ENCODE measurements at regions of chr12 and their contacts with region 1.

Region 1: DNA sequence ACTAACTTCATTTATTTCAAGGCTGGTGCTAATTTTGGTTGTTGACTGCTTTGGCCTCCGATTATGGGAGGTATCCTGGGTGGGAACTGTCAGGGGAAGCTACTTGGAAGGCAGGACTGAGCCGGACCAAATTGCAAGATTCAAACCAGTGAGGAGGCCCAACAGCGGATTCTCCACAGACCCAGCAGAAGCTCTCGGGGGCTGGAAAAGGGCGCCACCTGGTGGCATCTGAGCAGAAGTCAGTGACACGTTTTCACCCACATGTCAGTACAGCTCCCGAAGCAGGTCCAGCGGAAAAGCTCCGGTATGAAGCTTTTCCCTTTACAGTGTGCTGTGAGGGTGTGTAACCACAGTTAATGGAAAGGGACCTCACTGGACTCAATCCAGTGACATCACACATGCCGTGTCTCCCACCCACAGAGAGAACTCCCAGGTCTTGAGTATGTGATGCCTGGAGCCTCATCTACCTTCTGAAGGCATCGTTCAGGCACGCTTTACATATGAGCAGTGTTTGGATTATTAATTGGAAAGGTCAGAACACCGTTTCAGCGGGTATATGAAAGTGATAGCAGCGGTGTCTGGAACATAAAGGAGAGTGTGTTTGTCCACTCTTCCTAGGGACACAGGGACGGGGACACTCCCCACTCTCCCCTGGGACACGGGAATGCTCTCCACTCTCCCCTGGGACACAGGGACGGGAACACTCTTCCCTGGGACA is 3.6 kb upstream of the P2RX2 start:
- DNase-seq: peak; percentile 80 to 89
- ATAC-seq: peak; percentile 78 to 89
- H3K4me3 ChIP-seq: no peak overlapping the region
- H3K27ac ChIP-seq: no peak overlapping the region
- H3K4me1 ChIP-seq: peaks cover 10% of the 10 kb centered on the region
- CTCF ChIP-seq: peak; percentile 94
- EP300 ChIP-seq: no peak
- POLR2A ChIP-seq: no peak
- RAD21 ChIP-seq: peak; percentile 85 to 92

Region 2: DNA sequence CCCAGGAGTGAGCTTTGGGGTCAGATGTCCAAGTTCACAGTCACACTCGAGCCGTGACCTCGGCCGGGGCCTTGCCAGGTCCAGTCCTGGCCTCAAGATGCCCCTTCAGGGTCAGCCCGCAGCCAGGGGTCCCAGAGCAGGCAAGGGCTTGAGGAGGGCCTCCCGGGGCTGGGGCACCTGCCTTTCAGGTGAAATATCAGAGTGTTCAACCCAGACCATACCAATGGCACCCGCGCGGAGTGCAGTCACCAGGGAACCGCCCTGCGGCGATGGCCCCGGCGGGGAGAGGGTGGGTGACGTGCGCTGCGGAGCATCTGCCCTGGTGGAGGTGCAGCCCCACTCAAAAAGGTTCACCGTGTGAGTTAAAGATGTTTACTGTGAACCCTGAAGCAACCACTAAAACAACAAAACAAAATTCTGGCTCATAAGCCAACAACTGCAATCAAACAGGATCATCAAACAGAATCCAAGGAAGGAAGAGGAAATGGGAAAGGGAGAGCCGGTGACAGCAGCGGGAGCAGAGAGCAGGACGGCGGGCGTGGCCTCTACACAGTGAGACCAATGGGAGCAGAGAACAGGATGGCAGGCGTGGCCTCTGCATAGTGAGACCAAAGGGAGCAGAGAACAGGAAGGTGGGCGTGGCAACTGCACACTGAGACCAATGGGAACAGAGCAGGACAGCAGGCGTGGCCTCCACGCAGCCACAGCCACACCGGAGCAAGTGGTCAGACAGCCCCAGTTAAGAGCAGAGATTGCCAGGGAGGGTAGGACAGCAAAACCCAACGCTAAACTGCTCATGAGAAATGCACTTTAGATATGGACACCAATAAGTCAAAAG is 21.3 kb before region 1 on chr12:
- CTCF ChIA-PET with region 1: interaction called, 36 read pairs
- POLR2A ChIA-PET with region 1: no interaction called
- DNase-seq: peak; percentile 92 to 98
- ATAC-seq: peak; percentile 95 to 99
- H3K4me3 ChIP-seq: no peak overlapping the region
- H3K27ac ChIP-seq: 0 out of 6 replicates have a peak overlapping the region, but pooled peaks of 1 of the 2 experiments have one; percentile 7
- H3K4me1 ChIP-seq: 0 out of 3 replicates have a peak, but pooled peaks cover 3% of the 10 kb centered on the region
- CTCF ChIP-seq: no peak
- EP300 ChIP-seq: no peak
- POLR2A ChIP-seq: no peak
- RAD21 ChIP-seq: no peak

Region 3: GRCh38 chr12:132600048-132601032 is 14.7 kb before region 1 on chr12:
- CTCF ChIA-PET with region 1: interaction called, 36 read pairs
- POLR2A ChIA-PET with region 1: no interaction called
- DNase-seq: peak; percentile 76 to 78
- ATAC-seq: peak; percentile 84 to 91
- H3K4me3 ChIP-seq: peak overlapping the region; percentile 36
- H3K27ac ChIP-seq: peak overlapping the region; percentile 38 to 78; a peak in 5 of 6 replicates
- H3K4me1 ChIP-seq: peaks cover 11% of the 10 kb centered on the region; the same call in 1 of the 3 replicates
- CTCF ChIP-seq: peak; percentile 74
- EP300 ChIP-seq: no peak
- POLR2A ChIP-seq: no peak
- RAD21 ChIP-seq: peak; percentile 72 to 75

Region 4: DNA sequence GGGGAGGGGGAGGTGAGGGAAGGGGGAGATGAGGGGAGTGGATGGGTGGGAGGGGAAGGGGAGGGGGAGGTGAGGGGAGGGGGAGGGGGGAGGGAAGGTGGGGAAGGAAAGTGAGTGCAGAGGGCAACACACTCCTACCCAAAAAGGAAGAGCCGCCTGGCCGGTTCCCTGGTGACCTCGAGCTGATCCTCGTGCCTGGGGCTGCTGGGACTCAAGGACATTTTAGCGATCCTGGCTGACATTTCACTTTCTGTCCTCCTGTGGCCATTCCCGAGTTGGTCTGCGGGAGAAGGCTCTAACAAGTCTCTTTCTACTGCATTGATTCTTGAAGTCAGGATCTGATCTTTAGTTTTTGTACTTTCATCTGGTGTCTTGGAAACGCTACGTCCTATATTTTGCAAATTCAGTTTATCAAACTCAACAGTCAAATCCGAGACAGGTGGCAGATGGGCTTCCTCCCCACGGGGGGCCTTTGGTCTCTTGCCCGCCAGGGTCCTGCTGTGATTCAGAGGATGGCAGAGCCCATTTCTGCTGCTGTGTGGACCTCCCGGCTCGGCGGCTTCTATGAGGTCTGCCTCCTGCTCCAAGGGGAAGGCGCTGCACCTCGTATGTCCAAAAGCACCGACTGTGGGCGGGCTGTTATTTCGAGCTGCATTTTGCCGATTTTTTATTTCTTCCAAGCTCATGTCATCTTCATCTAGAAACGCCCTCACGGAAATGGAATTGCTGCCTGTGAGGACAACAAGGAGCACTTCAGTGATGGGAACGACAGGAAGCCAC is 114.7 kb after region 1 on chr12:
- CTCF ChIA-PET with region 1: no interaction called
- POLR2A ChIA-PET with region 1: no interaction called
- DNase-seq: peak in 1 of 2 experiments; percentile 56
- ATAC-seq: peak in 1 of 2 experiments; percentile 47; a peak in 3 of 6 replicates
- H3K4me3 ChIP-seq: no peak overlapping the region
- H3K27ac ChIP-seq: no peak overlapping the region
- H3K4me1 ChIP-seq: no peaks in the 10 kb centered on the region
- CTCF ChIP-seq: no peak
- EP300 ChIP-seq: no peak
- POLR2A ChIP-seq: no peak
- RAD21 ChIP-seq: no peak

Region 5: DNA sequence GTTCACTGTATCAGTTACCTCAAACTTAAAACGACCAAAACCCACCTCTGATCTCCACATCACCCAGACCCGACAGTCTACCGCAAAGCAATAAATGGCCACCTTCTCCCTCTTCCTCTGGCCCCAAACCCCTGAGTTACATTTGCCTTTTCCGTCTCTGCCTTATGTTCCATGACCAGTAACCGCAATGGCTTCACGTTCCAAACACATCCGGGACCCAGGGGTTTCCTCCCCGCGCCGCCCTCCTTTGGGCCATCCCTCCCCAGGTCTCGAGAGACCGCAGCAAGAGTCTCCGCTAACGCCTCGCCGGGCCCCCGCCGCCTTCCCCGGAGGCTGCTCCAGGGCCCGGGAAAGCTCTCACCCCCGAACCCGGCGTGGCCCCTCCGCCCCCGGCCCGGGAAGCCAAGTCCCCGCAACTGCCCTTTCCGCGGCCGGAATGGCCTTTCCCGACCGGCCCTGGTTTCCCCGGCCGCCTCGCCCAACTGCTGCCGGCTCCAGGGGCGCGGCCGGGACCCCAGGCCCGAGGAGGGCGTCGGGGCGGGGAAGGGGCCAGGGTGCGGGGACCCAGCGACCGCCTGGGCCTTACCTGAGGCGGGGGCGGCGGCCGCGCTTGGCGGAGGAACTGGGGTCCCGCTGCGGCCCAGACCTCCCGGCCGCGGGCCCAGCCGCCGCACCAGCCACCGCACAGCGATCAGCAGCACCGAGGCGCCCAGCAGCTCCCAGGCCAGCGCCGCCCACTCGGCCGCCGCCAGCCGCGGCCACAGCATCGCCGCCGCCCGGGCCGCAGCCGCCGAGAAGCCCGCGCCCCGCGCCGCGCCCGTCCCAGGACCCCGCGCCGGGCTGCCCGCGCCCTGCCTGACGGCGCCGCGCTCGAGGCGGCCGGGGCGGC is 146.3 kb after region 1 on chr12 and contains the start of gene ANKLE2:
- CTCF ChIA-PET with region 1: no interaction called
- POLR2A ChIA-PET with region 1: no interaction called
- DNase-seq: peak; percentile 42 to 63
- ATAC-seq: peak; percentile 62 to 63
- H3K4me3 ChIP-seq: peak within 1 kb of the TSS; percentile 98
- H3K27ac ChIP-seq: peak within 1 kb of the TSS; percentile 99
- H3K4me1 ChIP-seq: peaks cover 6% of the 10 kb centered on the region
- CTCF ChIP-seq: no peak
- EP300 ChIP-seq: no peak
- POLR2A ChIP-seq: peak; percentile 64
- RAD21 ChIP-seq: no peak
- polyA plus RNA-seq, gene ANKLE2: 103 and 132 TPM in 2 replicates

Measured in A549 (cell line).